Activated naive CD4-positive, alpha-beta T cell treated with anti-CD3 and anti-CD28 coated beads for 36 hours (primary cell): ENCODE measurements at regions of chr4 and their contacts with region 1.

Region 1: GRCh38 chr4:153750197-153750817 is 9.5 kb downstream of the RNF175 start:
- DNase-seq: peak; percentile 87
- H3K4me3 Mint-ChIP-seq: no peak overlapping the region
- H3K27ac Mint-ChIP-seq: no peak overlapping the region
- H3K4me1 Mint-ChIP-seq: peaks cover 11% of the 10 kb centered on the region
- H3K27me3 Mint-ChIP-seq: no peaks in the 10 kb centered on the region

Region 2: GRCh38 chr4:153426207-153426885 is 324.0 kb before region 1 on chr4:
- CTCF ChIA-PET with region 1: no interaction called
- intact Hi-C with region 1: loop called (anchors 5 kb)
- DNase-seq: no peak
- H3K4me3 Mint-ChIP-seq: no peak overlapping the region
- H3K27ac Mint-ChIP-seq: peak overlapping the region; percentile 63
- H3K4me1 Mint-ChIP-seq: peaks cover 65% of the 10 kb centered on the region
- H3K27me3 Mint-ChIP-seq: no peaks in the 10 kb centered on the region

Region 3: DNA sequence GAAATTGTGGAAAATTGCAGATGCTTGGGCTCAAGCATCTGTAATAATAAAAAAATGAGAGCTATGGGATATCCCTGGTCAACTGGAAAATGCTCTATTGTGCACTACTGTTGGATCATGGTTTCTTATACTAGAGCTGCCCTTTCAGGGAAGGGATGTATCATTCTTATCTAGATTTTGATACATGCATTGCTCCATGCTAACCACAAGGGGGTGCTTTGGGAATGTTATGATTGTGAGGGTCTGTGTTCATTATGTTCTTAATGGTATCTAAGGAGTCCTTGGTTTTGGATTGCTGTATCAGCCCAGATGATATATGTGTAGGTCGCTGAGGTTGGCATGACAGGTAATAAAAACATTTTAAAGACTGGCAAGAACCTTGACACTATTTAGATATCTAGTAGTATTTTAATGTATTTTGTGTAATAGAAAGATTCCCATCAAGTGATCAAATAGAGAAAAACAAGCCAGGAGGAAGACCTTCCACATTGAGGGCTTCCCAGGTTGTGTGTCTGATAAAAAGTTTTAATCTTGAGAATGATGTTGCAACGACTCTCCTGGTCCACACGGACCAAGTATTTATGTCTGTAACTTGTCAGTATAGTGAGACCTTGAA is 115.5 kb before region 1 on chr4:
- CTCF ChIA-PET with region 1: interaction called, 8 read pairs
- intact Hi-C with region 1: loop called (anchors 1 kb)
- DNase-seq: no peak
- H3K4me3 Mint-ChIP-seq: no peak overlapping the region
- H3K27ac Mint-ChIP-seq: peak overlapping the region; percentile 30
- H3K4me1 Mint-ChIP-seq: no peaks in the 10 kb centered on the region
- H3K27me3 Mint-ChIP-seq: no peaks in the 10 kb centered on the region

Region 4: GRCh38 chr4:153649572-153649991 is 100.7 kb before region 1 on chr4:
- CTCF ChIA-PET with region 1: interaction called, 47 read pairs
- intact Hi-C with region 1: loop called (anchors 1 kb)
- DNase-seq: peak; percentile 44
- H3K4me3 Mint-ChIP-seq: no peak overlapping the region
- H3K27ac Mint-ChIP-seq: no peak overlapping the region
- H3K4me1 Mint-ChIP-seq: peaks cover 32% of the 10 kb centered on the region
- H3K27me3 Mint-ChIP-seq: no peaks in the 10 kb centered on the region

Region 5: GRCh38 chr4:153731239-153731638 is 19.1 kb before region 1 on chr4:
- CTCF ChIA-PET with region 1: interaction called, 10 read pairs
- intact Hi-C with region 1: no loop called
- DNase-seq: no peak
- H3K4me3 Mint-ChIP-seq: no peak overlapping the region
- H3K27ac Mint-ChIP-seq: no peak overlapping the region
- H3K4me1 Mint-ChIP-seq: peaks cover 9% of the 10 kb centered on the region
- H3K27me3 Mint-ChIP-seq: no peaks in the 10 kb centered on the region